Gastrocnemius medialis (tissue), 4 donors: ENCODE measurements at regions of chr1 and their contacts with region 1.

Region 1: GRCh38 chr1:232319072-232319471 is 310.9 kb downstream of the SIPA1L2 start:
- DNase-seq: peak; percentile 37 to 81
- ATAC-seq: peak; percentile 89 to 93
- H3K4me3 ChIP-seq: peak overlapping the region in 1 of 4 donors; percentile 18
- H3K27ac ChIP-seq: peak overlapping the region; percentile 46 to 71 (median 61)
- H3K4me1 ChIP-seq: peaks cover 9 to 11% of the 10 kb centered on the region in 2 donors
- H3K27me3 ChIP-seq: no peaks in the 10 kb centered on the region
- CTCF ChIP-seq: no peak
- POLR2A ChIP-seq: no peak

Region 2: DNA sequence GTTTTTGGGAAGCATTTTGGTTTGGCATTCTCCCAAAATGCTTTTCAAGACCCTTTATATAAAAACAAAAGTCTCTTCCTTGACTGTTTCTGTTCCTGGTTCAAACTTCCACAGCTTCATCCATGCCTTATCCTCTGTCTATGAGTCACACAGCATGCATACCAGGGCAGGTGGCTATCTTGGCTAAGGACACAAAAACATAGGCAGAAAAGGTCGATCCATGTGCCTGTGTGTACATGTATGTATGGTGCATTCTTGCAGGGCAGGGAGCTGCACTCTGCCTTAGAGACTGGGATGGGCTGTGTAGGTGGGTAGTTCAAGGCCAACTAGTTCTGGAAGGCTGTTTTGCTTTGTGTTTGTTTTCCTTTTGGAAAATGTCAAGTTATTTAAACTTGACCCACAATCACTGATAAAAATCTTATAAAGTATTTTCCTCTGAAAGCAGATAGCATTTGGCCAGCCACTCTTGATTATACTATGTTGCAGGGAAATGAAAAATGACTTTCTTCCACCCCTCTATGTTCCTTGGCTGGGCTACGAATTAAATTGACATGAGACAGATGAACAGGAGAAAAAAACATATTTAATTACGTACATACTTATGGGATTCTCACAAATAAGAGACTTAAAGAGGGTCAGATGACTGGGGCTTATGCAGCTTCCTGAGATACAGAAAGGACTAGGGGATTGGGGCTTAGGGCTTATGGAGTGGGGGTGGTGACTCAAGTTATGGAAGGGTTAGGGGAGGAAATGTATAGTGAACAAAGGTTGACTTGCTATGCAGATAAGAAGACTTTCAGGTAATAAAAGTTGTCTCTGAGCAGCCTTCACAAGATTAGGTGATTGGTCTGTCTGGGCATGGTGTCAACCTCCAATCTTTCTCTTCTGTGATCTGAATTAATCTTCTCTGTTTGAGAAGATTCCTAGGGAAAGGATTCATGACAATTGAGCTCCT is 126.0 kb before region 1 on chr1:
- in situ Hi-C with region 1: no loop called
- intact Hi-C with region 1: no loop called
- DNase-seq: no peak
- ATAC-seq: no peak
- H3K4me3 ChIP-seq: no peak overlapping the region
- H3K27ac ChIP-seq: no peak overlapping the region
- H3K4me1 ChIP-seq: no peaks in the 10 kb centered on the region
- H3K27me3 ChIP-seq: no peaks in the 10 kb centered on the region
- CTCF ChIP-seq: no peak
- POLR2A ChIP-seq: no peak

Region 3: DNA sequence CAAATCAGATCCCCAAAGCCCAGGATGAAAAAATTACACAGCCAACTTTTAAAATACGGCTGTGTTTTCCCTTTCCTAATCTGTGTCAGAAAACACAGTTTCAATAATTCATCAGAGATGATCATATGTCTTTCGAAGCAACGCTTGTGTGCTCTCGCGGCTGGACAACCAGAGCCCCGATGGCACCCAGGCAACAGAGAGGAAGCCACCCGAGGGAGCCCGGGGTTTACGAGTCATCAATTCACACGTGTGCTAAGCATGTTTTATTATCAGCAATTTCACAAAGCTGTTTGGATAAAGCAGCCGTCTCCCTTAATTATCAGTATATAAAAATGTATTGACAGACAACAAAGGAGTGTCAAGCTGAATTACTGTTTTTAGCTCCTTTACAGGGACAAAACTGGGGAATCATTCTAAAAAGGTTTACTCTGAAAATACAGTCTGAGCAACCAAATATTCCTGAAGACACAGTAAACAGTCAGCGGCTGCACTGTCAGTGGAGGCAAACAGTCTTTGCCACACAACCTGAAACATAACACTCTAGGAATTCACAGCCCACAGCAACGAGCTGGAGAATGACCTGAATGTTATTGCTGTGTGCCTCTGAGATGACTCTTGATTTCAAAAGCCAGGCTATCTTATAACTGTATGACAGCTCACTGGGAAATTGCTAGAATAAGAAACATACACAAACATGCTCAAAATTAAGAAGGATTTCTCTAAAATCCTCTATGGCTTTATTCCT is 109.9 kb after region 1 on chr1:
- in situ Hi-C with region 1: no loop called
- intact Hi-C with region 1: loop called (anchors 1 kb)
- DNase-seq: peak; percentile 29 to 38
- ATAC-seq: peak; percentile 95 to 97
- H3K4me3 ChIP-seq: no peak overlapping the region
- H3K27ac ChIP-seq: peak overlapping the region in 1 of 4 donors; percentile 32
- H3K4me1 ChIP-seq: peaks cover 23 to 31% of the 10 kb centered on the region in 2 donors
- H3K27me3 ChIP-seq: no peaks in the 10 kb centered on the region
- CTCF ChIP-seq: no peak
- POLR2A ChIP-seq: no peak

Region 4: DNA sequence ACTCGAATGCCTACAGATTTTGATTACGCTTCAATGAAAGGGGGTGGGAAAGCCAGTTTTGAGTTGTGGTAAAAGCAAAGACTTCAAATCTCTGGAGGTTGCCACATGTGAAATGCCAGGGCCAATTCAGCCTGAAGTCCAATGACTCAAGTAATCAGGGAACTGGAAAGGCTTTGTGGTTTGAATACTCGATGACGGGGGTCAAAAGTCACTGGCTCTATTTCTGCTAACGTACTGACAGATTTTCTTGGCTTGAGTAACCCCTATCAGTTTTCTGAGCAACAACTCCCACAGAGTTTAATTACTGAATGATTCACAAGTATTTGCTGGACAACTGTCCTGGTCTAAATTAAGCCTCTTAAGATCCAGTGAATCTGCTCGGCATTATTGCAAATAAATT is 158.7 kb after region 1 on chr1:
- in situ Hi-C with region 1: no loop called
- intact Hi-C with region 1: loop called (anchors 5 kb)
- DNase-seq: peak; percentile 49 to 62
- ATAC-seq: peak; percentile 93 to 99
- H3K4me3 ChIP-seq: no peak overlapping the region
- H3K27ac ChIP-seq: peak overlapping the region; percentile 35 to 68 (median 48)
- H3K4me1 ChIP-seq: peaks cover 22 to 23% of the 10 kb centered on the region in 2 donors
- H3K27me3 ChIP-seq: no peaks in the 10 kb centered on the region
- CTCF ChIP-seq: no peak
- POLR2A ChIP-seq: no peak

Region 5: DNA sequence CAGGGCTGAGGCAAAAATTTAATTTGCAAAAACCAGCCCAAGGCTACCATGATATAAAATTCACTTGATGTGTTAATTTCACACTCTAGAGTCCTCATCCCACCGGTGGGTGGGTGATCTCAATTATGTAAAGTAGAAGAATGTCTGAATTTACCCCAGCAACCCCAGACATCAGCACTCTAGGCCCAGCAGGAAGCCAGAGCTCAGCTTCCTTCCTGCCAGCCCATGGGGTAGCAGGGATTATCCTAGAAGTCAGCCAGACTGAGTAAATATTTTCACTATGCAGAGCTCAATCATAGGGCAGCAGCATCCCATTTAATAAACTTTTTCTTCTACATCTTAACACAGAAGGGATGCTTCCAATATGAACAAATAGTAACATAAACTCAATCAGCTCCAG is 239.9 kb after region 1 on chr1:
- in situ Hi-C with region 1: no loop called
- intact Hi-C with region 1: loop called (anchors 5 kb)
- DNase-seq: no peak
- ATAC-seq: no peak
- H3K4me3 ChIP-seq: no peak overlapping the region
- H3K27ac ChIP-seq: no peak overlapping the region
- H3K4me1 ChIP-seq: peaks cover 21 to 40% of the 10 kb centered on the region in 2 donors
- H3K27me3 ChIP-seq: no peaks in the 10 kb centered on the region
- CTCF ChIP-seq: no peak
- POLR2A ChIP-seq: no peak

Region 6: DNA sequence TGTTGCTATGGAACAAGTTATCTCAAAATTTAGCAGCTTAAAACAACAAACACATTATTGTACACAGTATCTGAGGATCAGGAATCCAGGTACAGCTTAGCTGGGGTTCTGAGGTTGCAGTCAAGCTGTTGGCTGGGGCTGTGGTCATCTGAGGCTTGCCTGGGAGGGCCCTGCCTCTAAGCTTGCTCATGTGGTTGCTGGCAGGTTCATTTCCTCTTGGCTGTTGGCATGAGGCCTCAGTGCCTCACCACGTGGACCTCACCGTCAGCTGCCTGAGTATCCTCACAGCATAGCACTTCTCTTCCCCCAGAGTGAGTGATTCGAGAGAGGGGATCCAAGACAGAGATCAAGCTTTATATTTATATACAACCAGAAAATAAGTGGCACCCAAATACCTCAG is 649.9 kb after region 1 on chr1:
- in situ Hi-C with region 1: no loop called
- intact Hi-C with region 1: loop called (anchors 5 kb)
- DNase-seq: peak; percentile 87 to 91
- ATAC-seq: peak; percentile 87 to 88
- H3K4me3 ChIP-seq: no peak overlapping the region
- H3K27ac ChIP-seq: peak overlapping the region; percentile 74 to 81 (median 76)
- H3K4me1 ChIP-seq: peaks cover 34 to 40% of the 10 kb centered on the region in 2 donors
- H3K27me3 ChIP-seq: no peaks in the 10 kb centered on the region
- CTCF ChIP-seq: no peak
- POLR2A ChIP-seq: peak in 1 of 2 donors; percentile 18